ENCODE measurements at regions of chr1 and their contacts with region 1.

Region 1: DNA sequence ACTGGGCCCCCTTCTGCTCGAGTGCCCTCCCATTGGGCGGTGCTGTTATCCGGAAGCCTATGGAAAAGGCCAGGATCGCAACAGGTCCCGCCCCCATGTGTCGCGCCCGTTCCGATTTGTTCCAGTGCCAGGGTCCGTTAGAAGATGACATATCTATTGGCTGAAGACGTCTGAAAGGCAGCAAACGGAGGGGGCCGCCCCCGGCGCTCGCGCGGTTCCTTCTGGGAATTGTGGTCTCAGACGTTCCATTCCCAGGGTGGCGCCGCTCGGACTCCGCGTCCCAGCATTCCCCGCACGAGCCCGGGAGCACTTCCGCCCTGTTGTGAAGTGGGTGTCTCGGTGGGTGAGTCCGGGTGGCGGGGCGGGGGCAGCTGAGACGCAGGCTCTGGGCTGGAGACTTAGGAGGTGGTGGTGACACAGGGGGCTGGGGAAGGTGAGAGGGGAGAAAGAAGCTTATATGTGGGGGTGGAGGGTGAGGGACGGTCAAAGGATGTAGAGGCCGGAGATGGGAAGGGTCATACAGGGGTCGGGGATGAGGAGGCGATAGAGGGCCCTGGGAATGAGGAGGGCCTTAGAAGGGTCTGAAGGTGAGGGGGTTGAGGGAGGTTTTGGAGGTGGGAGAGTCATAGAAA is at the start of gene ZSCAN20:
- DNase-seq: peak; percentile 98 to 99 (median 99)
- ATAC-seq: peak; percentile 95 to 96
- H3K4me3 ChIP-seq: peak within 1 kb of the TSS; percentile 63
- H3K27ac ChIP-seq: peak within 1 kb of the TSS; percentile 71
- H3K4me1 ChIP-seq: peaks cover 5% of the 10 kb centered on the region
- H3K27me3 ChIP-seq: no peaks in the 10 kb centered on the region
- total RNA-seq, gene ZSCAN20: 3.8 to 5.9 (median 5.0) TPM

Region 2: GRCh38 chr1:33137800-33138199 is 334.7 kb before region 1 on chr1:
- intact Hi-C with region 1: loop called in 1 of 4 experiments (anchors 5 kb)
- DNase-seq: peak; percentile 49 to 75 (median 74)
- ATAC-seq: peak; percentile 34 to 51
- H3K4me3 ChIP-seq: no peak overlapping the region
- H3K27ac ChIP-seq: no peak overlapping the region
- H3K4me1 ChIP-seq: peaks cover 2% of the 10 kb centered on the region
- H3K27me3 ChIP-seq: no peaks in the 10 kb centered on the region

Region 3: DNA sequence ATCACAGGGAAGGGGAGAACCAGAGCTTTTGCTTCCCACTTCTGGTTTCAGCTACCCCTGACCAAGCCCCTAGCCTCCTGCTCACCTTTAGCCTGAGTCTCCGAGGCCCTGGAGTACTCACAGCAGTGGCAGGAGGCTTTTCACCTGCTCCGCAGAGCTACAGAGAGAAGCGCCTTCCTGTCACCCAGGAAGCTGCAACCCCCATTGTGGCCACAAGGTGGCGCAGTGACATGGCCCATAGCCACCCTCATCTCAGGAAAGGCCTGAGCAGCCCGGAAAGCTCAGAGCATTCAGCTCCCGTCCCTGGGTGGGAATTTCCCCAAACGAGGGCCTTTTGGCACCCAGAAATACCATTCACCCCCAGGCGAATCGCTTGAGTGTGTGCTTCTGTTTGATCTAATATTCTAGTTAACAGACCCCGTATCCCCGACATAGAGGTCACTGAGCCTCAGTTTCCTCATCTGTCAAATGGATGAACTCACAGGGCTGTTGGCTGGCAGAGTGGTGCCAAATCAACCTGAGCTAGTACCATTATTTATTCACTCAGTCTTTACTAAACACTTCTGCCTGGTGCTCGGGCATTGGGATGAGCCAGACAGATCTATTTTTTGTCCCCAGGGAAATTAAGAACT is 176.9 kb before region 1 on chr1:
- intact Hi-C with region 1: loop called (anchors 2 to 10 kb)
- DNase-seq: peak; percentile 82 to 93 (median 93)
- ATAC-seq: peak; percentile 78 to 81
- H3K4me3 ChIP-seq: no peak overlapping the region
- H3K27ac ChIP-seq: no peak overlapping the region
- H3K4me1 ChIP-seq: peaks cover 3% of the 10 kb centered on the region
- H3K27me3 ChIP-seq: no peaks in the 10 kb centered on the region

Region 4: GRCh38 chr1:33586111-33586510 is 113.6 kb after region 1 on chr1:
- intact Hi-C with region 1: no loop called
- DNase-seq: no peak
- ATAC-seq: no peak
- H3K4me3 ChIP-seq: no peak overlapping the region
- H3K27ac ChIP-seq: no peak overlapping the region
- H3K4me1 ChIP-seq: peaks cover 2% of the 10 kb centered on the region
- H3K27me3 ChIP-seq: no peaks in the 10 kb centered on the region

Region 5: GRCh38 chr1:33606272-33606671 is 133.8 kb after region 1 on chr1:
- intact Hi-C with region 1: loop called in 3 of 4 experiments (anchors 5 to 10 kb)
- DNase-seq: peak in 2 of 3 donors; percentile 70 to 81
- ATAC-seq: peak; percentile 51 to 85
- H3K4me3 ChIP-seq: no peak overlapping the region
- H3K27ac ChIP-seq: peak overlapping the region; percentile 43
- H3K4me1 ChIP-seq: no peaks in the 10 kb centered on the region
- H3K27me3 ChIP-seq: no peaks in the 10 kb centered on the region

Region 6: DNA sequence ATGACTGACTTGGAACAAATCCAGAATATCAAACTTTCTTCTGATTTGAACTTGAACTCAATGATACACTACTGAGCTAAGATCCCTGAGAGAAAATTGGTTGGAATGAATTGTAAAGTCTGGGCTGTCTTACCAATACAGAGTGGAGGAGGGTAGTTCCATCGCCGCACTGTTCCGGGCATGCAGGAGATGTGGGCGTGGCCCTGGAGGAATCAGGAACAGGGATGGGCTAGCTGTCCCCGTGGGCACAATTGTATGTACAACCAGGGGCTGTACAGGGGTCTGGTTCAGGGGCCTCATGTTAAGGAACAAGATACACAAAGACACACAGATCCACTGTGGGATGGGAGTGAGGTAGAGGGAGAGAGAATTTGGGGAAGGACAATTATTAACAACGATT is 144.3 kb after region 1 on chr1:
- intact Hi-C with region 1: loop called in 2 of 4 experiments (anchors 5 to 10 kb)
- DNase-seq: no peak
- ATAC-seq: peak in 1 of 2 donors; percentile 33
- H3K4me3 ChIP-seq: no peak overlapping the region
- H3K27ac ChIP-seq: no peak overlapping the region
- H3K4me1 ChIP-seq: no peaks in the 10 kb centered on the region
- H3K27me3 ChIP-seq: no peaks in the 10 kb centered on the region

Measured in right cardiac atrium (tissue), 5 donors.